ENCODE measurements at regions of chr7 and their contacts with region 1.

Region 1: DNA sequence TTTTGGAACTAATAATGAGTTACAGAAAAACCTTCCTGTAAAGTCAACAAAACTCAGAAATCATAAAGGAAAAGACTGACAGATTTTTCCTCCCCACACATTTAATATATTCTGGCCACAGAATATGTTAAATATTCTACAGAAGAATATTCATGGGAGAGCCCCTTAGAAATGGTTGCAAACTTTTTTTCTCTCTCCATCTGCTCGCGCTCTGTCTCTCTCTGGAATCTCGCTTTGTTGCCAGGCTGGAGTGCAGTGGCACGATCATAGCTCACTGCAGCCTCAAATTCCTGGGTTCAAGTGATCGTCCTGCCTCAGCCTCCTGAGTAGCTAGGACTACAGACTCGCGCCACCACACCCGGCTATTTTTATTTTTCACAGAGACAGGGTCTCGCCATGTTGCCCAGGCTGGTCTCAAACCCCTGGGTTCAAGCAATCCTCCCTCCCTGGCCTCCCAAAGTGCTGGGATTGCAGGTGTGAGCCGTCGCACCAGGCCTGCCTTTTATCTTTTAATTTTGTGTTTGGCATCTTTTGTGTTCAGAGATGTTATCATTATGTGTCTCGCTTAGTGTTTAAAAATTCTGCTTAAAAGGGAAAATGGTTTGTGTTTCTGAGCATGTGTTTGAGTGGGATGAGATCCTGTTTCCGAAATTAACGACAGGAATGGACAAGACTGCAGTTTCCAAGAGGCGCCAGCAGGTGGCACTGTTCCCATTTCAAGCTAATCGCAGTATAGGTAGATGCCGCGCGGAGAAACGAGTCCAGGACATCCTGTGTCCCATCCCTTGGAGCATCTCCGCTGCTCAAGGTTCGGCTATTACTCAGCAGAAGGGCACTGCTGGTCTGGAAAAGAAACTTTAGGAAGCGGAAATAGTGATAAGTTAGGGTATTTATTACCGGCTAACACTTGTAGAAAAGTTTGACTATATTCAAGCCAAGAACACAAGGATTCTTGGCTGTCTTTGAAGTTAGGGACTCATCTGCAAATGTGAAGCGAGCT is 23.1 kb upstream of the ST7 start:
- DNase-seq: peak; percentile 82 to 92 (median 89)
- ATAC-seq: peak; percentile 88 to 90
- H3K4me3 ChIP-seq: no peak overlapping the region
- H3K27ac ChIP-seq: no peak overlapping the region
- H3K4me1 ChIP-seq: no peaks in the 10 kb centered on the region
- H3K27me3 ChIP-seq: no peaks in the 10 kb centered on the region

Region 2: GRCh38 chr7:117014673-117015133 is 84.5 kb after region 1 on chr7:
- intact Hi-C with region 1: no loop called
- DNase-seq: peak; percentile 53 to 74 (median 68)
- ATAC-seq: peak; percentile 94 to 95
- H3K4me3 ChIP-seq: peak overlapping the region; percentile 27
- H3K27ac ChIP-seq: no peak overlapping the region
- H3K4me1 ChIP-seq: peaks cover 6% of the 10 kb centered on the region
- H3K27me3 ChIP-seq: no peaks in the 10 kb centered on the region

Region 3: DNA sequence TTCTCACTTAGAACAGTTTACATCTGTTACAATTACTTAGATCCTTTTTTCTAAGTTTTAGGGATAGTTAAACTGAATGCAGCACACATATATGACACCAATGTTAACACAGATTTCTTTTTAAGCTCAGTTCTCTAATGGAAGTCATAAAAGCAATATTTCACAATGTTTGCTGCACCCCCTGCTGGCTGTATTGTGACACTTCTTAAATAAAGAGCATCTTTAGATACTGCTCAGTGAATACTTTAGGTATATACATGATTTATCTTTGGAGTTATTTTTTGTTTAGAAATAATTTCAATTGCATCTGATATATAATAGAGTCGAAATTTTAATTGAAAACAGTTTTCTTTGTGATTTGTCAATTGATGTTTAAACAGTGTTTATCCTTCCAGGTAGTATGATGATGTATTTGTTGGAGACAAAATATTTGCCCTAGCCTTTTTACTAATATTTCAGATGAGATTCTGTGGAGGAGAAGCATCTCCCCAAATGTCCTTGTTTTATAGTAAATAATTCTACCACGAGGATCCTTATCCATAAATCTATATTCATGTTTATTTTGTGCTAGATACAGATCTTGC is 197.5 kb after region 1 on chr7:
- intact Hi-C with region 1: loop called in 1 of 4 experiments (anchors 5 kb)
- DNase-seq: peak in 2 of 3 donors; percentile 38 to 65
- ATAC-seq: peak; percentile 20 to 38
- H3K4me3 ChIP-seq: no peak overlapping the region
- H3K27ac ChIP-seq: no peak overlapping the region
- H3K4me1 ChIP-seq: no peaks in the 10 kb centered on the region
- H3K27me3 ChIP-seq: no peaks in the 10 kb centered on the region